ENCODE measurements at regions of chr1 and their contacts with region 1.

Region 1: GRCh38 chr1:52127181-52128180 is 14.4 kb upstream of the ZFYVE9 start:
- DNase-seq: no peak

Region 2: DNA sequence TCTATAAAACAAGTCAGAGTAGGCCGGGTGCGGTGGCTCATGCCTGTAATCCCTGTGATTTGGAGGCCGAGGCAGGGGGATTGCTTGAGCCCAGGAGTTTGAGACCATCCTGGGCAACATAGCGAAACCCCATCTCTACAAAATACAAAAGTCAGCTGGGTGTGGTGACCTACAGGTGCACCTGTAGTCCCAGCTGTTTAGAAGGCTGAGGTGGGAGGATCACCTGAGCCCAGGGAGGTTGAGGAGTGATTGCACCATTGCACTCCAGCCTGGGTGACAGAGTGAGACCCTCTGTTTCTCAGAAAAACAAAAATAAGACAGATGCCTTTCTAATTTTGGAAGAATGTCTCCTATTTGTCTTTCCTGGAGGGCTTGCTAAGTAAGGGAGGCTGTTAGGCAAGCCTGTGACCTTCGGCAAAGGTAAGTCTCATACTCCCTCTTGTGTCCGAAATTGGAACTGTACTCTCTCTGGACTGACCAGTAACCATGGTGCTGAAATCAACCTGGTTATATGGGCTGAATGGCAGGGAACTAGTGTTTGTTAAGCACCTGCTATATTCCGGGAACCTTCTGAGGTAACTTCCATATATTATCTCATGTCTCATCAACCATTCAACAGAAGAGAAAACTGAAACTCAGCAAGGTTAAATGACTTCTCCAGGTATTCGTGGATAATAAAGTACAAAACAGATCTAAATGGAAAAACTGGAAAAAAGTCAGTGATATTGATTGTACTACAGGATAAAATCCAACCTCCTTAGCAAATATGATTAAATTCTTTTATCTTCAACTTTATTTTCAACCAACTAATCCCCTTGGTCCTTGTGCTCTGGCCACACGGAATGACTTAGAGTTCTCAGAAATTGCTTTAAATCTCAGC is 125.2 kb before region 1 on chr1:
- intact Hi-C with region 1: no loop called
- DNase-seq: no peak

Region 3: DNA sequence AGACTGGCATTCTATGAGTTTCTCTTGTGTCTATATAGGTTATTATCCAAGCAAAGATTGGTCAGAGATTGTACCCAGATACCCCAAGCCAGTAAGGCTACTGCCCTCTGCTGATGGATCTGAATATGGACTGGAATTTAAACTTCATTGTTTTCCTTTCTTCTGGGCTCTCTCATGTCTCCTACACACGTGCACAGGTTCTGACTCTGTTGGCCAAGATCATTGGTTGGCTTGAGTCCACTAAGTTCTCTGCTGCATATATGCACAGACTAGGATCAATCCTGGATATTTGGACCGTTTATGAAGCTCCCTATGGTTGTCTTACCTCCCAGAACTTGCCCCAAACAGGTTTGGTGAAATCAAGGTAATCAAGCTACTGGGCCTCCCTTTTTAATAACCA is 168.9 kb after region 1 on chr1:
- intact Hi-C with region 1: loop called (anchors 5 kb)
- DNase-seq: no peak

Region 4: GRCh38 chr1:52683367-52683940 is 556.0 kb after region 1 on chr1:
- intact Hi-C with region 1: loop called (anchors 5 kb)
- DNase-seq: no peak

Region 5: GRCh38 chr1:53541761-53542550 is 1414.5 kb after region 1 on chr1:
- intact Hi-C with region 1: no loop called
- DNase-seq: peak; percentile 70

Measured in cardiac septum (tissue), 1 donor.